Activated T-helper 1 cell treated with anti-CD3 and anti-CD28 coated beads, Interleukin-12 subunit alpha, Interleukin-12 subunit beta, Interleukin-2, Interleukin-4 antibody, amounts not matched to agents 30 ng/mL and 10 ng/mL and 1 ng/mL, durations not matched to agents 14 hours and 24 hours and 36 hours (primary cell): ENCODE measurements at regions of chr6 and their contacts with region 1.

Region 1: DNA sequence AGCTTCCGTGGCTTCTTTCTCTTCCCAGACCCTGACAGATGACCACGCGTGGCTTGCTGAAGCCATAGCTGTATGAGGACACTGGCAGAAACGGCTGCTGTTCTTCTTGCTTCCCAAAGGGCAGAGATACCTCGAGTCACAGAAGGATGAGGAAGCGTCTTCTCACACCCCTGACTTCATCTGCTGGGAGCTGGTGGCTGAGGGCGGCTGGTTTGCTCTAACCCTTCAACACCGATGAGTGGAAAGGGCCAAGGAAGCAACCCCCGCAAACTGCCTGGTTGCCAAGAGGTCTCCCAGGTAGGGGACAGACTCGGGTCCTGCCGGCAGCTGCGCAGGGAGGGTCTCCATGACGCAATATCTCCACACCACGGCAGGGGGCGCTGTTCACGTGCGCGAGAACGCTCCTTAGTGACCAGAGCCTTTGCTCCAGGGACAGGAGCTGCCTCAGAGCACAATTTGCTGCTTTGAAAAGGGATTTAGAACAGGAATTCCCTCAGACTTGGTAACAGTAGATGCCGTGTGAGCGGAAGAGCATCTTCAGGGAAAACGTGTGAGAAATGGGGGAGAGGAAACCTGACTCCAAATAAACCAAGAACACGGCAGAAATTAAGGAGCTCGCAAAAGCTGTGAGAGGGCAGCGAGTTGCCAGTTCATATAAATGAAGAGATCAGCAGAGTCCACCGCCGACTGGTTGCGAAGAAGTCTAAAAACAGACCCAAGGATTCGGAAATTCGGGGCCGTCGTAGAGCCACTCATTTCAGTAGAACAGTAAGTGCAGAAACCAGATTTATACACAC is 80.2 kb downstream of the ERMARD start:
- DNase-seq: peak; percentile 45
- H3K4me3 Mint-ChIP-seq: no peak overlapping the region
- H3K27ac Mint-ChIP-seq: no peak overlapping the region
- H3K4me1 Mint-ChIP-seq: peaks cover 5% of the 10 kb centered on the region
- H3K27me3 Mint-ChIP-seq: no peaks in the 10 kb centered on the region

Region 2: GRCh38 chr6:169930799-169931198 is 99.2 kb after region 1 on chr6:
- intact Hi-C with region 1: loop called (anchors 1 kb)
- DNase-seq: no peak
- H3K4me3 Mint-ChIP-seq: no peak overlapping the region
- H3K27ac Mint-ChIP-seq: no peak overlapping the region
- H3K4me1 Mint-ChIP-seq: no peaks in the 10 kb centered on the region
- H3K27me3 Mint-ChIP-seq: peaks cover 3% of the 10 kb centered on the region

Region 3: GRCh38 chr6:170291271-170292110 is 459.8 kb after region 1 on chr6:
- intact Hi-C with region 1: loop called (anchors 1 kb)
- DNase-seq: no peak
- H3K4me3 Mint-ChIP-seq: peak overlapping the region; percentile 85
- H3K27ac Mint-ChIP-seq: peak overlapping the region; percentile 75
- H3K4me1 Mint-ChIP-seq: peaks cover 50% of the 10 kb centered on the region
- H3K27me3 Mint-ChIP-seq: peaks cover 72% of the 10 kb centered on the region

Region 4: DNA sequence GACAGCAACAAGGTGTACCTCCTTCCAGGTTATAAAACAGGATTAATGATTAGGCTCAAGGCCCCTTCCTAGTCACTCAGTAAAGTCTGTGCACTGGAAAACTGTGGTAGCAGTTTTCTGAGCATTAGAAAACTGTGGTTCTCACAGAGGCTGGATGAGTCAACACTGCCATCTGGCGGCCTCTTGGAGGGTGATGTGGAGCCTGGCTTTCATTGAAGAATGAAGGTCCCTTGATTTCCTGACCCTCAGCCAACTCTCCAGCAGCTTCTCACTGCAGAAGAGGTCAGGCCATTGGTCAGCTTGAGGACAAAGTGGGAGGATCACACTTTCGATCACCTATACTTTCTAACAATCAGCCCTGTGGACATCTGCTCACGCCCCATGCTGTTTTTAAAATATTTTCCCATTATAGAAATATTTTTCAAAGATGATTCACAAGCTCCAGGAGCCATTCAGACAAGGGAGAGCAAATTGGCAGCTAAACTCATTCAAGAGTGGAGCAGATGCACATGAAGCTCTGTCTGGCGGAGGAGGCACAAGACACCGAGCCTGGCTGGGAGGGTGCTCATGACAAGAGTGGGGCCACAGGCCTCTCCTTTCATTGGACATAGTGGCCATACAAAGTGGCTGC is 698.3 kb after region 1 on chr6:
- intact Hi-C with region 1: loop called (anchors 1 kb)
- DNase-seq: peak; percentile 43
- H3K4me3 Mint-ChIP-seq: no peak overlapping the region
- H3K27ac Mint-ChIP-seq: no peak overlapping the region
- H3K4me1 Mint-ChIP-seq: no peaks in the 10 kb centered on the region
- H3K27me3 Mint-ChIP-seq: peaks cover 3% of the 10 kb centered on the region